ENCODE measurements at regions of chr2 and their contacts with region 1.

Region 1: DNA sequence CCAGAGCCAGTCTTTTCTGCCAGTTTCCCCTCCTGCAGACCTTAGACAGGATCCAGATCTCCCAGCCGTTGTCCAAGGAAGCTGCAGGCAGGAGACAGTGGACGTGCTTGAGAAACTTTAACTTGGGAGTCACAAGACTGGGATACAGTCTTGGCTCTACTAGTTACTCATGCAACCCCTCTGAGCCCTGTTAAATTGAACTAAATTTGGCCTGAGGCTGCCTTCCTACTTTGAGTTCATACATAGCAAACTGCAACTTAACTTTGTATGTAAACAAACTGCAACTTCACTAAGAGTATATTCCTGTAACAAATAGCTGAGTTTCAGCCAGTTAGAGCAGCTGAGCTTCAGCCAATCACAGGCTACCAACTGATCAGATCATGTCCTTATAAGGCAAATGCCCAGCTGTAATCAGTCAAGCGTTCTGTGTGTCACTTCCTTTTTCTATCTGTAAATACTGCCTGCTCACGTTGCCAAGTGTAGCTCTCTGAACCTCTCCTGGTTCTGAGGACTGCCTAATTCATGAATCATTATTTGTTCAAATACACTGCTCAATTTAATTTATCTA is 140.9 kb downstream of the CAPN13 start:
- DNase-seq: peak; percentile 94
- H3K4me3 ChIP-seq: no peak overlapping the region
- H3K27ac ChIP-seq: peak overlapping the region; percentile 89
- H3K4me1 ChIP-seq: peaks cover 25% of the 10 kb centered on the region
- H3K27me3 ChIP-seq: no peaks in the 10 kb centered on the region
- CTCF ChIP-seq: no peak

Region 2: GRCh38 chr2:30165050-30165520 is 501.3 kb before region 1 on chr2:
- CTCF ChIA-PET with region 1: no interaction called
- dilution Hi-C with region 1: loop called (anchors 10 kb)
- in situ Hi-C with region 1: no loop called
- intact Hi-C with region 1: no loop called
- DNase-seq: peak; percentile 80
- H3K4me3 ChIP-seq: no peak overlapping the region
- H3K27ac ChIP-seq: no peak overlapping the region
- H3K4me1 ChIP-seq: peaks cover 5% of the 10 kb centered on the region
- H3K27me3 ChIP-seq: no peaks in the 10 kb centered on the region
- CTCF ChIP-seq: peak; percentile 80 to 91

Region 3: GRCh38 chr2:30569946-30570345 is 96.4 kb before region 1 on chr2:
- CTCF ChIA-PET with region 1: no interaction called
- dilution Hi-C with region 1: loop called (anchors 10 kb)
- in situ Hi-C with region 1: no loop called
- intact Hi-C with region 1: no loop called
- DNase-seq: no peak
- H3K4me3 ChIP-seq: no peak overlapping the region
- H3K27ac ChIP-seq: no peak overlapping the region
- H3K4me1 ChIP-seq: no peaks in the 10 kb centered on the region
- H3K27me3 ChIP-seq: no peaks in the 10 kb centered on the region
- CTCF ChIP-seq: no peak